ENCODE measurements at regions of chr15 and their contacts with region 1.

Region 1: DNA sequence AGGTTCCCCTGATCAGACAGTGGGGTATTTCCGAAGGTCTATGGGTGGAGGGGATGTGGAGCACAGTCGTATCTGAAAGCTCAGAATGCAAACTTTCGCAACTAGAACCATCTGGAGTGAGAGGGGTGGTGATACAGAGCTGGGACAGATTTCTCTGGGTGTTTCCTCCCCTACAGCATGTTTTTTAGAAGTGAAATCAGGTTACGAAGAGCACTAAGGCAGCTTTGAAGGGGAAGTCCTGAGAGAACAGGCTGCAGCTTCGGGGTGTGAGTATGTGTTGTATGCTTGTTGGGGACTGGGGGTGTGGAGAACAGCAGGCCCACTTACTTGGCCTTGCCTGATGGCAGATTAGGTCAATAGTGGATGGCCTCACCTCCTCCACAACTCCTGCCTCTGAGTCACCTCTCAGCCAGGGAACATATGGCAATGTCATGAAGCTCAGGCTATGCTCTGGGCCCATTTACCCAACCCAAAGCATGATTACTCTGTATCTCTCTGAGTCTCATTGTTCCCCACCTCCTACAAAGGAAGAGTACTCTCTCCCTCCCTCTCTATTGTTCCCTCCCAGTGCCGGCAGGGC is 107.2 kb upstream of the RASGRP1 start:
- DNase-seq: peak; percentile 65
- H3K4me3 Mint-ChIP-seq: peak overlapping the region; percentile 59
- H3K27ac Mint-ChIP-seq: peak overlapping the region; percentile 93
- H3K4me1 Mint-ChIP-seq: peaks cover 79% of the 10 kb centered on the region
- H3K27me3 Mint-ChIP-seq: no peaks in the 10 kb centered on the region

Region 2: GRCh38 chr15:38631126-38632075 is 40.4 kb before region 1 on chr15:
- intact Hi-C with region 1: loop called (anchors 1 kb)
- DNase-seq: no peak
- H3K4me3 Mint-ChIP-seq: peak overlapping the region; percentile 62
- H3K27ac Mint-ChIP-seq: peak overlapping the region; percentile 91
- H3K4me1 Mint-ChIP-seq: peaks cover 63% of the 10 kb centered on the region
- H3K27me3 Mint-ChIP-seq: no peaks in the 10 kb centered on the region

Region 3: DNA sequence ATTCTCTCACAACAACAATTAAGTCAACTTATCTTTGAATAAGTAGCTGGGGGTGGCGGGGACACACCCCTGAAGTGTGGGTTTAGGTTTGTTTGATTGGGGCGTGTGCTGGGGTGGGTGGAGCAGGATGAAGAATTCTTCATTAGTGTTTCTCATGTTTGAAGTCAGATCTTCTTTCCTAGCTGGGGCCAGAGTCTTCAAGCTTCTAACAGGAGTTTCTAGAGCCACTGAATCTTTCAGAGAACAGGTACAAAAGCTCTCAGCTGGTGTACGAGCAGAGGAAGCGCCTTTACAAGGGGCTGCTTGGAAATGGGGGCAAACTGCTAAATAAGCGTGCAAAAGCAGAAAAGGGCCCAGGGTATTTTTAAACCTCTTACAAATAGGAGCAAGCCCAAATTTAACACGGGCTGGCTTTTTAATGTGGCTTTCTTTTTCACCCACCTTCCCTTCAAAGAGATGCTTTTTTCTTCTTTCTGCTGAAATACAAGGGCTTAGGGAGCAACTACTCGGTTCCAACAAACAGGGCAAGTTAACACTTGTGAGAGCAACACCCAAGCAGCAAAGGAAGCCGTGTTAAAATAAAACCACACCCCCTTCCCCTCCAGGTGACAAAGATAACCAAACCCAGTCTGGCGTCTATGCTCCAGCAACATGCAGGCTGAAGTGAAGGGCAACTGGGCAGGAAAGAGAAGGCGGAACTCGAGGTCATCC is 20.3 kb before region 1 on chr15:
- intact Hi-C with region 1: loop called (anchors 1 kb)
- DNase-seq: peak; percentile 57
- H3K4me3 Mint-ChIP-seq: peak overlapping the region; percentile 79
- H3K27ac Mint-ChIP-seq: peak overlapping the region; percentile 94
- H3K4me1 Mint-ChIP-seq: peaks cover 93% of the 10 kb centered on the region
- H3K27me3 Mint-ChIP-seq: no peaks in the 10 kb centered on the region

Region 4: DNA sequence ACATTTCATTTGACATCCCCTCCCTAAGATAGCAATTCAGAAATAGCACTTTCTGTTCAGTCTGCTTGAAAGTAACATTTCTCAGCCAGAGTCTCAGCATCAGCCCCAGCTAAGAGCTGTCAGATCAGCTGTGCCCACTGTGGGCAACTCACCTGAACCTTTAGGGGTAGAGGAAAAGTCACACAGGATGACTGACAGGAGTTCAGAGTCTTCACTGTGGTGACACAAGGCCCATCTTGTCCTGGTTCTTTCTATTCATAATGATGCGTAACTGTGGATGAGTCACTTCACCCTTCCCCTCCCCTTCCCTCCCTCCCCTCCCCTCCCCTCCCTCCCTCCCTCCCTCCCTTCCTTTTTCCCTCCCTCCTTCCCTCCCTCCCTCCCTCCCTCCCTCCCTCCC is 11.0 kb before region 1 on chr15:
- intact Hi-C with region 1: loop called (anchors 1 kb)
- DNase-seq: no peak
- H3K4me3 Mint-ChIP-seq: peak overlapping the region; percentile 74
- H3K27ac Mint-ChIP-seq: peak overlapping the region; percentile 88
- H3K4me1 Mint-ChIP-seq: peaks cover 85% of the 10 kb centered on the region
- H3K27me3 Mint-ChIP-seq: no peaks in the 10 kb centered on the region

Region 5: GRCh38 chr15:38683382-38684242 is 11.8 kb after region 1 on chr15:
- intact Hi-C with region 1: loop called (anchors 1 kb)
- DNase-seq: peak; percentile 57
- H3K4me3 Mint-ChIP-seq: peak overlapping the region; percentile 65
- H3K27ac Mint-ChIP-seq: peak overlapping the region; percentile 95
- H3K4me1 Mint-ChIP-seq: peaks cover 80% of the 10 kb centered on the region
- H3K27me3 Mint-ChIP-seq: no peaks in the 10 kb centered on the region

Measured in activated T-helper 1 cell treated with anti-CD3 and anti-CD28 coated beads, Interleukin-12 subunit alpha, Interleukin-12 subunit beta, Interleukin-2, Interleukin-4 antibody, amounts not matched to agents 30 ng/mL and 10 ng/mL and 1 ng/mL, durations not matched to agents 14 hours and 24 hours and 36 hours (primary cell).